Activated CD4-positive, alpha-beta memory T cell treated with anti-CD3 and anti-CD28 coated beads, Interleukin-2, amount 10 ng/mL, durations not matched to agents 7 days and 5 days (primary cell): ENCODE measurements at regions of chr3 and their contacts with region 1.

Region 1: DNA sequence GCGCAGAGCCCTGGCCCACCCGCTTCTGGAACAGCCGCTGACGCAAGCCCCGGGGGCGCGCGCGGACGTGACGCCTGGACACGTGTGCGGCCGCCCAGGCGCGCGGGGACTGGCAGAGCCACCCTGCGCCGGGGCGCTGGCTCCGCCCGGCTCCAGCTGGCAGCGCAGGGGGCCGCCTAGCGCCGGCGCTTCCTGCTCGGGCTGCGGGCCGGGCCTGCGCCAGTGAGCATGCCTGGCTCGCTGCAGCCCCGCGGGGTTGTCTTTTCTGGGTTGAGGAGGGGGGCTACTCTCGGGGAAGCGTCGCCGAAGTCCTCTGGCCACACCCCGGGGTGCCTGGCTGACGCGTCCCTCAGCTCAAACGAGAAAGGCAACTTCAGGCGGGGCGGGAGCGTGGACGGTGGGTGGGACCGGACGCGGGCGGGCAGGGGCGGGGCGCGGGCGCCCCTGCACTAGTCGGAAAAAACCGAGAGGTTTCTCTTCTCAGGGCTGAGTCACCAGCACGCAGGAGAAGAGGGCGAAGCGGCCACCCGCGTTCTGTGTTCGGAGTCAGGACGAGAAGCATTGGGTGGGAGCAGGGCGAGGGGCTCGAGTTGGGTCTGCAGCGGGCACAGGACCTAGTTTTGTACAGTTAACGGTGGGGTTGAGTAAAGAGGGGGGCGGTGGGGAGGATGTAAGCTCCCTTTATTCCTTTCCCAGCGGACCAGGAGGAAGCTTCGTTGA is at the start of gene SIAH2:
- DNase-seq: peak; percentile 93
- H3K4me3 Mint-ChIP-seq: peak within 1 kb of the TSS; percentile 97
- H3K27ac Mint-ChIP-seq: peak within 1 kb of the TSS; percentile 100
- H3K4me1 Mint-ChIP-seq: peaks cover 45% of the 10 kb centered on the region
- H3K27me3 Mint-ChIP-seq: no peaks in the 10 kb centered on the region
- total RNA-seq, gene SIAH2: 42.5 to 44.9 TPM

Region 2: GRCh38 chr3:150480877-150481276 is 282.4 kb before region 1 on chr3:
- CTCF ChIA-PET with region 1: no interaction called
- POLR2A ChIA-PET with region 1: no interaction called
- DNase-seq: no peak
- H3K4me3 Mint-ChIP-seq: no peak overlapping the region
- H3K27ac Mint-ChIP-seq: no peak overlapping the region
- H3K4me1 Mint-ChIP-seq: no peaks in the 10 kb centered on the region
- H3K27me3 Mint-ChIP-seq: peaks cover 2% of the 10 kb centered on the region

Region 3: DNA sequence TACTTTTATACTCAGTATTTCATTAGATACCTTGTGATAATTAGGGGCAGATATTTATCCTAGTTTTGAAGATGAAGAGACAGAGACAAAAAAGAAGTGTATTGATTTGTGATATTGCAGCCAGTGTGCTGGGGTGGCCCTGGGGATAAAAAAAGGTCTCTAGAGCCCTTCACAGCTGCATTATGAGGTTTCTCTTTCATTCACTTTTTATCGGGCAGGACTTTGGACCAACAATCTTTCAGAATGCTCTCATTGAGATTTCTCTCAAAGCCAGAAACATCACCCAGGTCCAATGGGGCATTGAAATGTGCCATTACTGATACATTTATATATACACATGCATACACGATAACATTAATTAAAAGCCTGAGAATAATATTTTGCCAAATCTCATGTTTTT is 180.7 kb before region 1 on chr3:
- CTCF ChIA-PET with region 1: no interaction called
- POLR2A ChIA-PET with region 1: interaction called, 10 read pairs
- DNase-seq: no peak
- H3K4me3 Mint-ChIP-seq: peak overlapping the region; percentile 49
- H3K27ac Mint-ChIP-seq: peak overlapping the region; percentile 75
- H3K4me1 Mint-ChIP-seq: peaks cover 22% of the 10 kb centered on the region
- H3K27me3 Mint-ChIP-seq: no peaks in the 10 kb centered on the region

Region 4: GRCh38 chr3:150721285-150722130 is 41.8 kb before region 1 on chr3:
- CTCF ChIA-PET with region 1: interaction called, 28 read pairs
- POLR2A ChIA-PET with region 1: interaction called, 21 read pairs
- DNase-seq: no peak
- H3K4me3 Mint-ChIP-seq: no peak overlapping the region
- H3K27ac Mint-ChIP-seq: no peak overlapping the region
- H3K4me1 Mint-ChIP-seq: peaks cover 32% of the 10 kb centered on the region
- H3K27me3 Mint-ChIP-seq: no peaks in the 10 kb centered on the region

Region 5: GRCh38 chr3:150743508-150743907 is 19.8 kb before region 1 on chr3:
- CTCF ChIA-PET with region 1: interaction called, 4 read pairs
- POLR2A ChIA-PET with region 1: interaction called, 39 read pairs
- DNase-seq: no peak
- H3K4me3 Mint-ChIP-seq: no peak overlapping the region
- H3K27ac Mint-ChIP-seq: peak overlapping the region; percentile 5
- H3K4me1 Mint-ChIP-seq: peaks cover 80% of the 10 kb centered on the region
- H3K27me3 Mint-ChIP-seq: no peaks in the 10 kb centered on the region

Region 6: DNA sequence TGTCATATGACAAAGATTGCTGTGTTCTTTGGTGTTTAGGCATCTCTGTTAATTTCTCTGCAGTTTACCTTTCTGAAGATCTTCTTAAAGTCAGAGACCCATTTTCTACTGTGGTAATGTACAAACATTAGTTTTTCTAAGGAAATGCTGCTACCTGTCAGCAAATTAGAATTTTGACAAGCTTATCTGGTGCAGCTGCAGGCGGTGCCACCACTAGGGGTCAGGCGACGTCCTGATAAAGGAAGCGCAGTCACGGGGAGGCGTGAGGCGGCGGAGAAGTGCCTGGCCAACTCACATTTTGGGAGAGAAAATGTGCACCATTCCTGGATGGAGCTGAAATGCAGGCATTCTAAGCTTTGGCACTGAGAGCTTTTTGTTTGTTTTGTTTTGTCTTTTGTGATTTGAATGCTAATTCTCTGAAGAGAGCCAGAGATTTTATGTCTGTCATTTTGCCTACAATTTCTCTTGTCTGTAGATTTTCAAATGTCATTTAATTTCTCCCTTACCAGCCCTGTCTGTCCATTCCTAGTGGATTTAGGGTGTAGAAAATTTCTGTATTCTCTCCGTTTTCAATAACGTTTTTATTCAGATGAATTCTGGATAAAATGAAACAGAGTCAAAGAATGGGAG is 24.6 kb after region 1 on chr3:
- CTCF ChIA-PET with region 1: interaction called, 29 read pairs
- POLR2A ChIA-PET with region 1: interaction called, 59 read pairs
- DNase-seq: peak; percentile 82
- H3K4me3 Mint-ChIP-seq: no peak overlapping the region
- H3K27ac Mint-ChIP-seq: no peak overlapping the region
- H3K4me1 Mint-ChIP-seq: peaks cover 42% of the 10 kb centered on the region
- H3K27me3 Mint-ChIP-seq: peaks cover 2% of the 10 kb centered on the region